ENCODE measurements at regions of chr14 and their contacts with region 1.

Region 1: DNA sequence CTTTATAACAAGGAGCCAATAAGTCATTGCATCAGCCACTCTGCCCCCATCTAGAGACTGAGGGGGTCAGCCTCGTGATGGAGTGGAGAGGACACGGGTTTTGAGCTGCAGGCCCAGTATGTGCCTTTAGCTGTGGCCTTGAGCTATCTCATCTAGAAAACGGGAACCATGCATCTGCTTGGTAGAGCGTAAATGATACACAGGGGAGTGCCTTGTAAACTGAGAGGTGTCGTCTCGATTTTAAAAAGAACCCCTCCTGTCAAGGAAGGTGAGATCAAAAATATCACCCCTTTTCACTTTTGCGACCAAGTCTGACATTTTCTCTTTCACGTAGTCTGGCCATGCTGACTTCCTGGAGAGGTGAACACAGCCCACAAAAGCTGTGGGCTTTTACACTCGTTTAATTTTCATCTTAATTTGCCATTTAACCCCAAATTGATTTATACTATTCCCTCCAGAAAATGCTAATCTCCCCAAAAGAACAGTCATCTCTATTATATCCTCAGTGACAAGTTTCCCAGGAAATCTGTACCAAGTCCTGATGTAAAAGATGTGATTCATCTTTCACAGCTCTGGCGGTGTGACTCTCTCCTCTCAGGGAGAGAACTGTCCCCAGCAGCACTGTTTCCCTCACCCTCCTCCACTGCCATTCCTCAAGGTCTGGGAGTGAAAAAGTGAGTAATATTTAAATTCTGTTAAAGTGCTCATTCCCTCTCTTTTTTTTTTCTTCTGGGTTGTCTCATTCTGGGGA is 30.6 kb downstream of the VCPKMT start:
- DNase-seq: peak in 1 of 9 donors; percentile 45
- ATAC-seq: no peak
- H3K4me3 ChIP-seq: no peak overlapping the region
- H3K4me3 Mint-ChIP-seq: peak overlapping the region; percentile 56 to 80 (median 70)
- H3K27ac ChIP-seq: peak overlapping the region; percentile 97
- H3K27ac Mint-ChIP-seq: peak overlapping the region; percentile 86 to 97 (median 90)
- H3K4me1 ChIP-seq: peaks cover 86 to 94% of the 10 kb centered on the region in 2 donors
- H3K4me1 Mint-ChIP-seq: peaks cover 65 to 97% (median 91%) of the 10 kb centered on the region in 7 donors
- H3K27me3 ChIP-seq: no peaks in the 10 kb centered on the region
- H3K27me3 Mint-ChIP-seq: no peaks in the 10 kb centered on the region

Region 2: DNA sequence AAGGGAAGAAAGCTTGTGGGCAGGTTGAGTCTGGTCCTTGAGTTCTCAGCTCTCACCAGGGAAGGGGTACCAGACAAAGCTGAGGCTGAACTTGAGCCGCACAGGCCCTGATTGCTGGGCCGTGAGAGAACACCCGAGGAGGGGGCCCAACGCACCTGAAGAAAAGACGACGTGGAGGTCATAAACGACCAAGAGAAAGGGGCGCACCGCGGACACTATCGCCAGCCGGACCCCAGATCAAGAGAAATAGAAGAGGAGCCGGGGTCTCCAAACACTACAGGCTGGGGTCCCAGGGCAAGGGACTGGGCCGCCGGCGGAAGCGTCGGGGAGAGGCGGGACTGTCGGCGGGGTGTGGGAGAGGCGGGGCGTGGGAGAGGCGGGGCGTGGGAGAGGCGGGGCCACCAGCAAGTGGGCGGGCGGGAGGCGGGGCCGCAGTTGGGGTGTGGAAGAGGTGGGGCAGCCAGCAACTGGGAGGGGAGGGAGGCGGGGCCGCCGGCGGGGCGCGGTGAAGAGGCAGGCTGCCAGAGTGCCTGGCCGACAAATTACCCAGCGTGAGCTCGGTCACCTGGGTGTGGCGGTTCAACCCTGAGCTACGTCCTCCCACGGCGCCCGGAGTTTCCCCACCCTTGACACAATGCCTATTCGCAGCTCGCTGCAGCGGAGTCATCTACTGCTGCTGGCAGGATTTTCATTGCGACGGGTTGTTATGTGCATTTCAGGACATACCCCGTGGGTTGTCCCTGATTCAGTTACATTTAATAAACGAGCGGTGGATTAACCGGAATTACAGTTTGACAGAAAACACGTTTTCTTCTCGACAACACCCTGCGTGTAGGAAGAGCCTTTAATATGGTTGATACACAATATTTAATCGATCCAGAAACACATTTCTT is 217.7 kb before region 1 on chr14:
- CTCF ChIA-PET with region 1: interaction called, 17 read pairs
- POLR2A ChIA-PET with region 1: interaction called, 328 read pairs
- intact Hi-C with region 1: loop called in 1 of 2 experiments (anchors 1 kb)
- DNase-seq: peak; percentile 87 to 97 (median 93)
- ATAC-seq: peak; percentile 96
- H3K4me3 ChIP-seq: peak overlapping the region; percentile 75
- H3K4me3 Mint-ChIP-seq: peak overlapping the region; percentile 79 to 95 (median 90)
- H3K27ac ChIP-seq: peak overlapping the region; percentile 91
- H3K27ac Mint-ChIP-seq: peak overlapping the region; percentile 93 to 99 (median 97)
- H3K4me1 ChIP-seq: peaks cover 31 to 35% of the 10 kb centered on the region in 2 donors
- H3K4me1 Mint-ChIP-seq: peaks cover 9 to 31% (median 17%) of the 10 kb centered on the region in 7 donors
- H3K27me3 ChIP-seq: no peaks in the 10 kb centered on the region
- H3K27me3 Mint-ChIP-seq: no peaks in the 10 kb centered on the region

Region 3: GRCh38 chr14:49950275-49951228 is 135.2 kb before region 1 on chr14:
- CTCF ChIA-PET with region 1: no interaction called
- POLR2A ChIA-PET with region 1: no interaction called
- intact Hi-C with region 1: no loop called
- DNase-seq: peak in 1 of 9 donors; percentile 10
- ATAC-seq: no peak
- H3K4me3 ChIP-seq: no peak overlapping the region
- H3K4me3 Mint-ChIP-seq: peak overlapping the region in 6 of 10 donors; percentile 16 to 64 (median 36)
- H3K27ac ChIP-seq: no peak overlapping the region
- H3K27ac Mint-ChIP-seq: peak overlapping the region in 4 of 9 donors; percentile 9 to 72 (median 32)
- H3K4me1 ChIP-seq: peaks cover 20 to 29% of the 10 kb centered on the region in 2 donors
- H3K4me1 Mint-ChIP-seq: peaks cover 20 to 62% (median 54%) of the 10 kb centered on the region in 7 donors
- H3K27me3 ChIP-seq: no peaks in the 10 kb centered on the region
- H3K27me3 Mint-ChIP-seq: no peaks in the 10 kb centered on the region

Region 4: GRCh38 chr14:50038398-50039119 is 47.2 kb before region 1 on chr14:
- CTCF ChIA-PET with region 1: interaction called, 4 read pairs
- POLR2A ChIA-PET with region 1: interaction called, 7 read pairs
- intact Hi-C with region 1: loop called (anchors 1 kb)
- DNase-seq: peak in 1 of 9 donors; percentile 69
- ATAC-seq: peak; percentile 79
- H3K4me3 ChIP-seq: no peak overlapping the region
- H3K4me3 Mint-ChIP-seq: peak overlapping the region in 3 of 10 donors; percentile 40 to 59 (median 53)
- H3K27ac ChIP-seq: no peak overlapping the region
- H3K27ac Mint-ChIP-seq: peak overlapping the region in 8 of 9 donors; percentile 36 to 95 (median 83)
- H3K4me1 ChIP-seq: peaks cover 46 to 52% of the 10 kb centered on the region in 2 donors
- H3K4me1 Mint-ChIP-seq: peaks cover 33 to 68% (median 54%) of the 10 kb centered on the region in 7 donors
- H3K27me3 ChIP-seq: no peaks in the 10 kb centered on the region
- H3K27me3 Mint-ChIP-seq: no peaks in the 10 kb centered on the region

Region 5: DNA sequence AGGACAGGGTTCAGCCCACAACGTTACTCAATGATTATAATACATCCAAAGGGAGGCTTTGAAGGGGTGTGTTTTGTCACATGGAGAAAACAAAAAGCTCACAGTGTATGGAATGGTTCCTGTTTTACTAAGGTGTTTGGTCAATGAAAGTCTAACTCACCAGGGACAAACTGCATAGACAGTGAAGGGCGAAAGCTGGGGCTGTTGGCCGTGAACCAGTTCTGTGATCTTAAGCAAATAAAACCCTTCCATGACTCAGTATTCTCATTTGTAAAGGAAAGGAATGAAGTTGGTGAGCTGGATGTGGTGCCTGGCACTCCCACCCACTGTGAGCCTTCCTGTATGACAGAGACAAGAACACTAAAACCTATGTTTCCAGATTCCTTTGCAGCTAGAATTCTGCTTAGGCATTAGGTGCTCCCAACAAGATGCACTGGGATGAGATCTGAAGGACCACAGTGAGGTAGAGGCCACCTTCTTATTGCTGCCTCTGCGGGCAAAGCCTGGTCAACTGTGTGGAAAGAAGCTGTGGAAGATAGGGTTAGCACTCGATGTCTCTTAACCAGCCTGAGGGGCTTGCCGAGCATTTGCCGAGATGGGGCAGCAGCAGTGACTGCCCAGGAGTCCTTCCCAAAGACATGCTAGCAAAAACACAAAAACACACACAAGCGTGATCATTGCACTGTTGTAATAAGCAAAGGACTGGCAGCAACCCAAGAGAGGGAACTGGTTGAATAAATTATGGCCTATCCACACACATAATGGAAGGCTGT is 17.8 kb before region 1 on chr14:
- CTCF ChIA-PET with region 1: interaction called, 23 read pairs
- POLR2A ChIA-PET with region 1: interaction called, 131 read pairs
- intact Hi-C with region 1: no loop called
- DNase-seq: peak in 1 of 9 donors; percentile 14
- ATAC-seq: no peak
- H3K4me3 ChIP-seq: no peak overlapping the region
- H3K4me3 Mint-ChIP-seq: no peak overlapping the region
- H3K27ac ChIP-seq: no peak overlapping the region
- H3K27ac Mint-ChIP-seq: peak overlapping the region in 4 of 9 donors; percentile 4 to 96 (median 43)
- H3K4me1 ChIP-seq: peaks cover 33% of the 10 kb centered on the region in 2 donors
- H3K4me1 Mint-ChIP-seq: peaks cover 40 to 69% (median 57%) of the 10 kb centered on the region in 7 donors
- H3K27me3 ChIP-seq: no peaks in the 10 kb centered on the region
- H3K27me3 Mint-ChIP-seq: no peaks in the 10 kb centered on the region

Region 6: DNA sequence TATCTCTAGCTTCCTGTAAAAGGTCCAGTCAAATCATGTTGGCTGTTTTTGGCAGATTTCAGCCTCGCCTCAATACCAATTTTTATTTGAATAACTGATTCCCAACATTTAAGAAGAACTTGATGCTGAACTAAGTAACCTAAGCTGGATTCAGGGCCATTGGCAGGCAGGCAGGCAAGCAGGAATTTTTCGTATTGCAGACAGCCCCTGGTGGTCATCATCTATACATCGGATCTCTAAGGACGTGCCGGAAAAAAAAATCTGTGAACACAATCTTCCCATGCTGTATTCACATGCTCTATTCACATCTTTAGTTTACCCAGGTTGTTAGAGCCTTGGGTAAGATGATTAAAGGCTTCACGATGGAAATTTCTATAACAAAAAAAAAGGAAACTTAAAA is 23.6 kb after region 1 on chr14:
- CTCF ChIA-PET with region 1: interaction called, 16 read pairs
- POLR2A ChIA-PET with region 1: interaction called, 128 read pairs
- intact Hi-C with region 1: loop called (anchors 1 kb)
- DNase-seq: no peak
- ATAC-seq: no peak
- H3K4me3 ChIP-seq: no peak overlapping the region
- H3K4me3 Mint-ChIP-seq: no peak overlapping the region
- H3K27ac ChIP-seq: no peak overlapping the region
- H3K27ac Mint-ChIP-seq: no peak overlapping the region
- H3K4me1 ChIP-seq: peaks cover under 1 to 4% of the 10 kb centered on the region in 2 donors
- H3K4me1 Mint-ChIP-seq: peaks cover 0 to 21% (median 16%) of the 10 kb centered on the region in 7 donors
- H3K27me3 ChIP-seq: no peaks in the 10 kb centered on the region
- H3K27me3 Mint-ChIP-seq: no peaks in the 10 kb centered on the region